Naive thymus-derived CD4-positive, alpha-beta T cell (primary cell): ENCODE measurements at regions of chr1 and their contacts with region 1.

Region 1: DNA sequence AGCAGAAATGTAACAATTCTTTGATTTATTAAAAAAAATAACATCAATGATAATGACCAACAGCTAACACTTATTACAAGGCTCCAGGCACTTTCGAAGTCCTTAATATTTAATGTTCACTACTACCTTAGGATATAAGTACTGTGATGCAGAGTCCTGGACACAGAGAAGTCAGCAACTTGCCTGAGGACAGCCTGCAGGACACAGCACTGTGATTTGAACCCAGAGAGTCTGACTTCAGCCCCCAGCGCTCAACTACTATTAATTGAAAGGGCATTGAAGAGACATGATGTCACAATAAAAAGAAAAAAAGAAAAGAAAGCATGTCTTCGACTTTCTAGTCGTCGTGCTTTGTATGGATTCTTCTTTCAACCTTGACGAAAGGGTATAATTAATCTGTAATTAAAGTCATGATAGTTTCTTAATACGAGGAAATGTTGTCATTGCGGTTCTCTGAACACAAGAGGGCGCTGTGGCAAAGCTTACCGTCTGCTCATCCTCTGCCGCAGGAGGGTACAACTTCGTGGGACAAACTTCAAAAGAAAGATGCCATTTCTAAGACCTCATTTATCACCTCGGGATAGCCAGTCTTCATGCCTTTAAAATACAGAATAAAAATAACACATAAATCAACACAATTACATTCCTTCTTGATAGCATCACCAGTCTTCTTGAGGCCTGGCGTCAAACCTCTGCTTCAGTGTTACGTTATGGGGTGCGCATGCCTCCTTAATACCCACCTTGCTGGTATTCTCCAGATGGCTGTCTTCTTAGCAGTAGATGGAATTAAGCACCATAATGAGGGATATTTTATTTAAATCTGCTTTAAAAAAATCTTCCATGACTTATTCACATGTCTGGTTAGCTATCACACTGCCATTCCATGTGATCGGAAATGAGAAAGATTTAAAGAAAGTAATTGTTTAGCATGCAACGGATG is 240.1 kb downstream of the DISC1 start:
- DNase-seq: peak; percentile 23 to 63 (median 46)
- ATAC-seq: peak; percentile 75
- H3K4me3 ChIP-seq: no peak overlapping the region
- H3K4me3 Mint-ChIP-seq: peak overlapping the region in 6 of 10 donors; percentile 6 to 72 (median 32)
- H3K27ac ChIP-seq: no peak overlapping the region
- H3K27ac Mint-ChIP-seq: peak overlapping the region in 3 of 9 donors; percentile 13 to 77 (median 16)
- H3K4me1 ChIP-seq: no peaks in the 10 kb centered on the region
- H3K4me1 Mint-ChIP-seq: peaks cover 9 to 57% (median 53%) of the 10 kb centered on the region in 7 donors
- H3K27me3 ChIP-seq: no peaks in the 10 kb centered on the region
- H3K27me3 Mint-ChIP-seq: no peaks in the 10 kb centered on the region

Region 2: GRCh38 chr1:231774719-231775335 is 91.8 kb before region 1 on chr1:
- CTCF ChIA-PET with region 1: no interaction called
- POLR2A ChIA-PET with region 1: no interaction called
- intact Hi-C with region 1: no loop called
- DNase-seq: no peak
- ATAC-seq: peak; percentile 56
- H3K4me3 ChIP-seq: no peak overlapping the region
- H3K4me3 Mint-ChIP-seq: no peak overlapping the region
- H3K27ac ChIP-seq: no peak overlapping the region
- H3K27ac Mint-ChIP-seq: no peak overlapping the region
- H3K4me1 ChIP-seq: no peaks in the 10 kb centered on the region
- H3K4me1 Mint-ChIP-seq: peaks cover 0 to 8% (median 0%) of the 10 kb centered on the region in 7 donors
- H3K27me3 ChIP-seq: no peaks in the 10 kb centered on the region
- H3K27me3 Mint-ChIP-seq: no peaks in the 10 kb centered on the region

Region 3: DNA sequence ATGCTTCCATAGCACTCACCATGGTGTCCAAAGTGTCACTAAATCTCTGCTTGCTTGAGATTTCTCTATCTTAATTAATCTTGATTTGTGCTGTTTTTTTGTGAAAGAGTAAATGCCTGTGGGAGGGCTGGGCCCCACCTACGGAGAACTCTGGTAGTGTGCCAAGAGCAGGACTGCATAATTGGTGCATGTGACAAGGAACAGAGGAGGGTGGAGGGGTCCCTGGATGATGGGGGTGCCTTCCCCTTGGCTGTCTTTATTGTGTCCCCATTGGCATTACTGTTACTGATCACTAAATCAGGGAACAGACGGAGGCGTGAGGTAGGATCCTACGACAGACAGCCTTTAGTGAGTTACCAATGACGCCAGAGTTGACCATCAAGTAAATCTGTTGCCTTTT is 16.7 kb before region 1 on chr1:
- CTCF ChIA-PET with region 1: no interaction called
- POLR2A ChIA-PET with region 1: no interaction called
- intact Hi-C with region 1: no loop called
- DNase-seq: no peak
- ATAC-seq: no peak
- H3K4me3 ChIP-seq: no peak overlapping the region
- H3K4me3 Mint-ChIP-seq: no peak overlapping the region
- H3K27ac ChIP-seq: no peak overlapping the region
- H3K27ac Mint-ChIP-seq: no peak overlapping the region
- H3K4me1 ChIP-seq: no peaks in the 10 kb centered on the region
- H3K4me1 Mint-ChIP-seq: peaks cover 0 to 18% (median 7%) of the 10 kb centered on the region in 7 donors
- H3K27me3 ChIP-seq: no peaks in the 10 kb centered on the region
- H3K27me3 Mint-ChIP-seq: no peaks in the 10 kb centered on the region

Region 4: GRCh38 chr1:231887866-231888265 is 21.2 kb after region 1 on chr1:
- CTCF ChIA-PET with region 1: no interaction called
- POLR2A ChIA-PET with region 1: no interaction called
- intact Hi-C with region 1: no loop called
- DNase-seq: no peak
- ATAC-seq: no peak
- H3K4me3 ChIP-seq: no peak overlapping the region
- H3K4me3 Mint-ChIP-seq: no peak overlapping the region
- H3K27ac ChIP-seq: no peak overlapping the region
- H3K27ac Mint-ChIP-seq: peak overlapping the region in 1 of 9 donors; percentile 59
- H3K4me1 ChIP-seq: no peaks in the 10 kb centered on the region
- H3K4me1 Mint-ChIP-seq: peaks cover 0 to 25% (median 9%) of the 10 kb centered on the region in 7 donors
- H3K27me3 ChIP-seq: no peaks in the 10 kb centered on the region
- H3K27me3 Mint-ChIP-seq: no peaks in the 10 kb centered on the region

Region 5: DNA sequence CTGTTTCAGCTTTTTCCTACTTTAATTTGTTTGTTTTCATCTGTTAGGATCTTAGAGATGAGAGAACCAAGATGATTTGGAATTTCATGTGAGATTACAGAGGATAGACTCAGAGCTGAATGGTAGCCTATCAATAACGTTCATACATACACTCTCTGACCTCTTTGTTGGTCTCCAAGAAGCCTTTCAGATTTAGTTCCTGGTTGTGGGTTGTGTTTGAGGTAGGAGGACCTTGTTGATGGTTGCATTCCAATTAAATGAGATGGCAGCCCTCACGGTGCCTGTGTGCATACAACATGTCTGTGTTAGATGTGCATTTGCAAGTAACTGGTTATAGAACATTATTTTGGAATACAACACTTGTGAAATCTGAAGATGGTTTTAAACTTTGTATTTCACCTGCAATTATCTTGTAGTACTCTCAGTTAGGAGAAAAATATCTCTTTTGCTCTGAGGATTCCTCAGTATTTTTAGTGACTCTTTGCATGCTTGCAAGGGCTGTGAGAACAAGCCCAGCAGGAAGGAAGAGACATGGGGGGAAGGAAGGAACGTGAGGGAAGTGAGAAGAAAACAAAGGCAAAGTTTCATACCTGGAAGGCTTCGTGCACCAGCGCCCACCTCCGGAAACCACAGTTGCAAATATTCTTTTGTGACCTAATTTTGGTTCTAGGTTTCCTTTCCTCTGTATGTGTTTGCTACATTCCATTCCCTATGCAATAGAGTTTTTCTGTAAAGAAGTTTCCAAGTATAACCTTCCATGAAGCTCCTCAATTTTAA is 51.8 kb after region 1 on chr1:
- CTCF ChIA-PET with region 1: interaction called, 15 read pairs
- POLR2A ChIA-PET with region 1: no interaction called
- intact Hi-C with region 1: loop called in 1 of 2 experiments (anchors 2 kb)
- DNase-seq: peak in 7 of 9 donors; percentile 26 to 57 (median 44)
- ATAC-seq: peak; percentile 40
- H3K4me3 ChIP-seq: peak overlapping the region; percentile 15
- H3K4me3 Mint-ChIP-seq: peak overlapping the region; percentile 64 to 90 (median 80)
- H3K27ac ChIP-seq: peak overlapping the region; percentile 61
- H3K27ac Mint-ChIP-seq: peak overlapping the region in 8 of 9 donors; percentile 80 to 94 (median 88)
- H3K4me1 ChIP-seq: peaks cover 57 to 63% of the 10 kb centered on the region in 2 donors
- H3K4me1 Mint-ChIP-seq: peaks cover 52 to 90% (median 83%) of the 10 kb centered on the region in 7 donors
- H3K27me3 ChIP-seq: no peaks in the 10 kb centered on the region
- H3K27me3 Mint-ChIP-seq: peaks cover 0 to 28% (median 0%) of the 10 kb centered on the region in 5 donors

Region 6: GRCh38 chr1:231986631-231987551 is 120.2 kb after region 1 on chr1:
- CTCF ChIA-PET with region 1: interaction called, 4 read pairs
- POLR2A ChIA-PET with region 1: no interaction called
- intact Hi-C with region 1: loop called (anchors 2 to 10 kb)
- DNase-seq: no peak
- ATAC-seq: no peak
- H3K4me3 ChIP-seq: no peak overlapping the region
- H3K4me3 Mint-ChIP-seq: no peak overlapping the region
- H3K27ac ChIP-seq: no peak overlapping the region
- H3K27ac Mint-ChIP-seq: no peak overlapping the region
- H3K4me1 ChIP-seq: no peaks in the 10 kb centered on the region
- H3K4me1 Mint-ChIP-seq: peaks cover 0 to 19% (median 11%) of the 10 kb centered on the region in 7 donors
- H3K27me3 ChIP-seq: no peaks in the 10 kb centered on the region
- H3K27me3 Mint-ChIP-seq: no peaks in the 10 kb centered on the region

Region 7: DNA sequence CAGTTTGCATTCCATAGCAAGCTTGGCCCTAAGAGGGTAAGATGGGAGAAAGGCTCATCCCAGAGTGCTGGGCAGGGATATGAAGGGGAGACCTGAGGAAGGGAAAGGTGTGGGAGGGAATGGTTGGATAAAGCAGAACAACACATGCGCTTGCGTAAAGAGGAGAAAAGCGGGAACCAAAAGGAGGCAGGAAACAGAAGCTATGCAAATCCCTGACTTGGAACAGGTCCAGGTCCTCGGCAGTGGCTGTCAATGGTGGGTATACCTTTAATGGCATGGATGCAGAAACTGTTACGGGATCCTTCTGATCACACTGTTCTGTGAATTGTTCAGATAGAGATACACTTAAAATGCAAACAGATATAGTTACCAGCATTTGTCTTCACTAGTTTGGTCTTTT is 307.6 kb after region 1 on chr1:
- CTCF ChIA-PET with region 1: no interaction called
- POLR2A ChIA-PET with region 1: no interaction called
- intact Hi-C with region 1: loop called in 1 of 2 experiments (anchors 10 kb)
- DNase-seq: no peak
- ATAC-seq: no peak
- H3K4me3 ChIP-seq: no peak overlapping the region
- H3K4me3 Mint-ChIP-seq: no peak overlapping the region
- H3K27ac ChIP-seq: no peak overlapping the region
- H3K27ac Mint-ChIP-seq: no peak overlapping the region
- H3K4me1 ChIP-seq: no peaks in the 10 kb centered on the region
- H3K4me1 Mint-ChIP-seq: peaks cover 0 to 12% (median 10%) of the 10 kb centered on the region in 7 donors
- H3K27me3 ChIP-seq: no peaks in the 10 kb centered on the region
- H3K27me3 Mint-ChIP-seq: peaks cover 0 to 20% (median 15%) of the 10 kb centered on the region in 5 donors

Region 8: GRCh38 chr1:232344791-232345399 is 478.2 kb after region 1 on chr1:
- CTCF ChIA-PET with region 1: no interaction called
- POLR2A ChIA-PET with region 1: no interaction called
- intact Hi-C with region 1: no loop called
- DNase-seq: no peak
- ATAC-seq: no peak
- H3K4me3 ChIP-seq: no peak overlapping the region
- H3K4me3 Mint-ChIP-seq: no peak overlapping the region
- H3K27ac ChIP-seq: no peak overlapping the region
- H3K27ac Mint-ChIP-seq: no peak overlapping the region
- H3K4me1 ChIP-seq: no peaks in the 10 kb centered on the region
- H3K4me1 Mint-ChIP-seq: no peaks in the 10 kb centered on the region
- H3K27me3 ChIP-seq: no peaks in the 10 kb centered on the region
- H3K27me3 Mint-ChIP-seq: peaks cover 3 to 31% (median 20%) of the 10 kb centered on the region in 5 donors

Region 9: GRCh38 chr1:232793944-232794343 is 927.3 kb after region 1 on chr1:
- CTCF ChIA-PET with region 1: no interaction called
- POLR2A ChIA-PET with region 1: no interaction called
- intact Hi-C with region 1: loop called in 1 of 2 experiments (anchors 5 kb)
- DNase-seq: peak in 6 of 9 donors; percentile 5 to 53 (median 27)
- ATAC-seq: peak; percentile 41
- H3K4me3 ChIP-seq: no peak overlapping the region
- H3K4me3 Mint-ChIP-seq: peak overlapping the region in 8 of 10 donors; percentile 5 to 66 (median 38)
- H3K27ac ChIP-seq: no peak overlapping the region
- H3K27ac Mint-ChIP-seq: peak overlapping the region in 6 of 9 donors; percentile 11 to 75 (median 32)
- H3K4me1 ChIP-seq: peaks cover 7 to 11% of the 10 kb centered on the region in 2 donors
- H3K4me1 Mint-ChIP-seq: peaks cover 8 to 23% (median 16%) of the 10 kb centered on the region in 7 donors
- H3K27me3 ChIP-seq: no peaks in the 10 kb centered on the region
- H3K27me3 Mint-ChIP-seq: peaks cover 0 to 5% (median 0%) of the 10 kb centered on the region in 5 donors